ENCODE measurements at regions of chr3 and their contacts with region 1.

Region 1: GRCh38 chr3:24351779-24352469 is 142.7 kb downstream of the THRB start:
- DNase-seq: peak; percentile 49 to 95 (median 66)
- ATAC-seq: peak; percentile 86
- H3K4me3 ChIP-seq: no peak overlapping the region
- H3K27ac ChIP-seq: peak overlapping the region; percentile 89
- H3K4me1 ChIP-seq: peaks cover 3 to 56% of the 10 kb centered on the region in 2 experiments
- H3K27me3 ChIP-seq: no peaks in the 10 kb centered on the region
- CTCF ChIP-seq: no peak
- EP300 ChIP-seq: peak; percentile 93
- POLR2A ChIP-seq: no peak
- RAD21 ChIP-seq: peak in 1 of 2 experiments; percentile 48; a peak in 2 of 4 replicates

Region 2: GRCh38 chr3:23859016-23859743 is 492.7 kb before region 1 on chr3:
- CTCF ChIA-PET with region 1: no interaction called
- POLR2A ChIA-PET with region 1: no interaction called
- in situ Hi-C with region 1: no loop called
- intact Hi-C with region 1: no loop called
- DNase-seq: no peak
- ATAC-seq: no peak
- H3K4me3 ChIP-seq: no peak overlapping the region
- H3K27ac ChIP-seq: no peak overlapping the region
- H3K4me1 ChIP-seq: no peaks in the 10 kb centered on the region
- H3K27me3 ChIP-seq: no peaks in the 10 kb centered on the region
- CTCF ChIP-seq: no peak
- EP300 ChIP-seq: no peak
- POLR2A ChIP-seq: no peak
- RAD21 ChIP-seq: no peak

Region 3: DNA sequence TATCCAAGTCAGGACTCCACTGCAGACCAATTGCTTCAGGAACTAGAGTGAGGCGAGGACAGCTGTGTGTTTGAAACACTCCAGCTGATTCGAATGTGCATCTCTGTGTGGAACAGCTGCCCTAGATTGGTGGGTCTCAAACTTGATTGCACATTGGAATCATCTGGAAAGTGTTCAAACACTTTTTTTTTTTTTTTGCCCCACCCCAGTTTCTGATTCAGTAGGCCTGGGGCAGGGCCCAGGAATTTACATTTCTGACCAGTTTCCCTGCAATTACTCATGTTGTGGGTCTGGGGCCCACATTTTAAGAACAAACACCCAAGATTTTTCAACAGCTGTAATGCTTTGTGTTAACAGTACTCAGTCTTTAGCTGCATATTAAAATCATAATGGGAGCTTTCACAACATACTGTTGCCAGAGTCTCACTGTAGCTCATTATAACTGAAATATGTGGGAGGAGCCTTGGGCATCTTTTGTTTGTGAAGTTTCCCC is 250.2 kb before region 1 on chr3:
- CTCF ChIA-PET with region 1: no interaction called
- POLR2A ChIA-PET with region 1: no interaction called
- in situ Hi-C with region 1: no loop called
- intact Hi-C with region 1: no loop called
- DNase-seq: no peak
- ATAC-seq: no peak
- H3K4me3 ChIP-seq: no peak overlapping the region
- H3K27ac ChIP-seq: no peak overlapping the region
- H3K4me1 ChIP-seq: no peaks in the 10 kb centered on the region; a peak in 3 of 5 replicates
- H3K27me3 ChIP-seq: peaks cover 0 to 5% of the 10 kb centered on the region in 2 experiments; a peak in 1 of 5 replicates
- CTCF ChIP-seq: no peak
- EP300 ChIP-seq: no peak
- POLR2A ChIP-seq: no peak
- RAD21 ChIP-seq: no peak

Region 4: DNA sequence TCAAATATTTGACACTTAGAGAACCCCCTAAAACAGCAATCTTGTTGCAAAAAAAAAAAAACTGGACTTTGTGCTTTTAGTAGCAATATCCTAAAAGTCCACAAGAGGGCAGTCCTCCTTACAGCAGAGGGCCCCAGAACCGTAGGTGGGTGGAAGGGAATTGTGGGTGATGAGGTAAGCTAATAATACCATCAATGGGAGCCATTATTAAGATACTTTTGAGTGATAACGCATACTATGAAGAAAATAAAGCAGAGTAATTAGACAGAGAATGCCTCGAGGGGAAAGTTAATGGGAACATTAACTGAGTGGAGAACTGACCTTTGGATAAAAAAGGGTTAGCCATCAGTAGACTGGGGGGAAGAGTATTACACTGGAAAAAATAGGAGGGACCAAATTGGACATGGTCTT is 87.2 kb before region 1 on chr3:
- CTCF ChIA-PET with region 1: no interaction called
- POLR2A ChIA-PET with region 1: interaction called, 4 read pairs
- in situ Hi-C with region 1: no loop called
- intact Hi-C with region 1: loop called (anchors 1 kb)
- DNase-seq: peak; percentile 74 to 83 (median 78)
- ATAC-seq: peak; percentile 52
- H3K4me3 ChIP-seq: no peak overlapping the region
- H3K27ac ChIP-seq: no peak overlapping the region
- H3K4me1 ChIP-seq: peaks cover 9 to 24% of the 10 kb centered on the region in 2 experiments; a peak in 4 of 5 replicates
- H3K27me3 ChIP-seq: no peaks in the 10 kb centered on the region
- CTCF ChIP-seq: peak; percentile 71 to 87 (median 85)
- EP300 ChIP-seq: no peak
- POLR2A ChIP-seq: no peak
- RAD21 ChIP-seq: peak; percentile 73 to 82

Region 5: DNA sequence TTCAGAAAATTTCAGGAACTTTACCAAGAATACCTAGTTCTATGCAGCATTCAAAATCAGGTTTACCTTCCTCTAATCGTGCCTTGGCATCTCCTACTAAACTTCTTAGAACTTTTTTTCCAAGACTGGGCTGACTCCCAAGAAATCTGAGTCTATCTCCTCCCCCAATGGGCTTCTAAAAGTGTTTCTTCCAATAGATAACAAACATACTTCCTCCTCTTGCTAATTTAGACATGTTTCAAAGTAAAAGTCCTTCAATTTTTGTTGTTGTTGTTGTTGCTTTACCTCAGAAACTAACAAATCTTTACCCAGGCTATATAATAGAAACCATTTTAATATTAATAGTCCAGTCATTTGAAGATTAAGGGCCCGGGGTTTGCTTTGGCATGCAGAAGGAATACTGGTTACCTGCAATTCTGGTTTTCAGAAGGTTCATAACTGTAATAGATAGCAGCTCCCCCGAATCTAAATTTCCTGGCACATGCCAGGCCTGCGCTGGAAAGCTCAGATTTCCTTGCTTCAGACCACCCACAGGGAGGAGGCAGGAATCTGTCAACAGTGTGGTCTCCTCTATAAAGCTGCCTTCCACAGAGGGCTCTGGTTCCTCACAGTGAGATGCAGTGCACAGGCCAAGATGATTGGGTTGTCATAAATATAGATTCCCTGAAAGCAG is 46.0 kb before region 1 on chr3:
- CTCF ChIA-PET with region 1: no interaction called
- POLR2A ChIA-PET with region 1: no interaction called
- in situ Hi-C with region 1: no loop called
- intact Hi-C with region 1: loop called (anchors 2 kb)
- DNase-seq: peak; percentile 36 to 67 (median 50)
- ATAC-seq: peak; percentile 56
- H3K4me3 ChIP-seq: no peak overlapping the region
- H3K27ac ChIP-seq: no peak overlapping the region
- H3K4me1 ChIP-seq: peaks cover 7 to 8% of the 10 kb centered on the region in 2 experiments
- H3K27me3 ChIP-seq: no peaks in the 10 kb centered on the region
- CTCF ChIP-seq: no peak
- EP300 ChIP-seq: peak; percentile 68
- POLR2A ChIP-seq: no peak
- RAD21 ChIP-seq: no peak

Region 6: DNA sequence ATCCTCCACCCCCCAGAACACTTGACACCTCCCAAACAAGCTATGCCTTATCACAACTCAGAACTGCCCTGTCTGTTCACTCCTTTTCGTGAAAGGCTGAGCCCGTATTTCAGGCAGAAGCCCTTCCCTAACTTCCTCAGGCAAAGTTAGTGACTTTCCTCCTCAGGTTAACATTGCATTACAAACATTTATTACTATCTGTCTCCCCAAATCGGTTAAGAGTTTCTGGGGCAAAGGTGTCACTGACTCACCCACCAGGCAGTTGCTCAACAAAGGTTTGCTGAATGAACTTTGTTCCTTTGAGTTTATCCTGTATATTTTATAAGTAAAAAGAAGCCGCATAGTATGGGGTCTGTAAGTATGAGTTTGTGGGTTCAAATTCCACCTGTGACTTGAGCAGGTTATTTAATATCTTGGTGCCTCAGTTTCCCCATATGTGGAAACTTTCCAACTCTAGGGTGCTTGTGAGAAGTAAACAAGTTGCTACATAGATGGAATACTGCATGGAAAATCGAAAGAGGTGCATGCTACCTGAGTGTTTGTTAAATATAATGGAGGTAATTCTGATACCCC is 35.0 kb before region 1 on chr3:
- CTCF ChIA-PET with region 1: no interaction called
- POLR2A ChIA-PET with region 1: no interaction called
- in situ Hi-C with region 1: no loop called
- intact Hi-C with region 1: no loop called
- DNase-seq: peak in 1 of 4 experiments; percentile 23
- ATAC-seq: peak; percentile 62
- H3K4me3 ChIP-seq: no peak overlapping the region
- H3K27ac ChIP-seq: no peak overlapping the region
- H3K4me1 ChIP-seq: peaks cover 3% of the 10 kb centered on the region in 2 experiments; a peak in 2 of 5 replicates
- H3K27me3 ChIP-seq: no peaks in the 10 kb centered on the region
- CTCF ChIP-seq: no peak
- EP300 ChIP-seq: no peak
- POLR2A ChIP-seq: no peak
- RAD21 ChIP-seq: no peak

Region 7: GRCh38 chr3:24341668-24342067 is 10.3 kb before region 1 on chr3:
- CTCF ChIA-PET with region 1: no interaction called
- POLR2A ChIA-PET with region 1: interaction called, 10 read pairs
- in situ Hi-C with region 1: no loop called
- intact Hi-C with region 1: no loop called
- DNase-seq: peak in 1 of 4 experiments; percentile 40
- ATAC-seq: peak; percentile 66
- H3K4me3 ChIP-seq: no peak overlapping the region
- H3K27ac ChIP-seq: 0 out of 3 replicates have a peak overlapping the region, but pooled peaks have one; percentile 15
- H3K4me1 ChIP-seq: peaks cover 6 to 28% of the 10 kb centered on the region in 2 experiments; a peak in 3 of 5 replicates
- H3K27me3 ChIP-seq: no peaks in the 10 kb centered on the region
- CTCF ChIP-seq: no peak
- EP300 ChIP-seq: no peak
- POLR2A ChIP-seq: no peak
- RAD21 ChIP-seq: no peak

Region 8: DNA sequence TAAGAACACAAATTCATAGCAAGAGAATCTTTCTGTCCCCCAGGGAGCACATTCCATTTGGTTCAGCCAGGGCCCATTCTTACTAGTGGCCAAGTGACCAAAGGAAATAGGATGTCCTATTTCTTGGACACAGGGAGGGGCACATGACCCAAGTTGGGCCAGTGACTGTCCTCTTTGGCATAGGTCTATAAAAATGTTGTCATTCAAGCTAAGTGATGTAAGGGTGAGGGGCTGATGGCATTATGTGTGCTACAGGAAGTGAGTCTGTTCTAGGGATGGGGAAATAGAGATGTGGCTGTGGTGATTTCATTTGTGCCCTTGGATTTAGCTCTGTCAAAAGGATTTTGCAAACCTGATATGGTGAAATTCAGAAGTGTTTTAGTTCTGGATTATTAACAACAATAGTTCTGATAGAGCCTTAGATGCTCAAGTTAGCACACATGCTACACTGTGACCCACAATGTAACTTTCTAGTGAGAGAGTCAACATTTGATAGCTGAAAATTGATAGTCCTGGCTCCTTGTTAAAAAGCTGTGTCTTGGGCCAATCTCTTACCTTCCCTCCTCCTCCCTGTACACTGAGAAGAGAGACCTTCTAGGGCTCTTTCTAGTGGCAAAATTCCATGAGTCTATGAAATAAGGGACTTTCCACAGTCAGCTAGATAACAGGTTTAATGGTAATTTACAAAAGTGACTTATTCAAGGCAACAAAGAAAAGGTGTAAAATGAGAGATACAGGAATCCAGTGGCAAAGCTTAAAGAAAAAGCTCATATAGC is 25.5 kb after region 1 on chr3:
- CTCF ChIA-PET with region 1: no interaction called
- POLR2A ChIA-PET with region 1: interaction called, 11 read pairs
- in situ Hi-C with region 1: no loop called
- intact Hi-C with region 1: loop called (anchors 2 kb)
- DNase-seq: no peak
- ATAC-seq: peak; percentile 27
- H3K4me3 ChIP-seq: no peak overlapping the region
- H3K27ac ChIP-seq: peak overlapping the region; percentile 67; the same call in 2 of the 3 replicates
- H3K4me1 ChIP-seq: peaks cover 3 to 49% of the 10 kb centered on the region in 2 experiments; a peak in 3 of 5 replicates
- H3K27me3 ChIP-seq: no peaks in the 10 kb centered on the region
- CTCF ChIP-seq: no peak
- EP300 ChIP-seq: no peak
- POLR2A ChIP-seq: no peak
- RAD21 ChIP-seq: no peak

Region 9: DNA sequence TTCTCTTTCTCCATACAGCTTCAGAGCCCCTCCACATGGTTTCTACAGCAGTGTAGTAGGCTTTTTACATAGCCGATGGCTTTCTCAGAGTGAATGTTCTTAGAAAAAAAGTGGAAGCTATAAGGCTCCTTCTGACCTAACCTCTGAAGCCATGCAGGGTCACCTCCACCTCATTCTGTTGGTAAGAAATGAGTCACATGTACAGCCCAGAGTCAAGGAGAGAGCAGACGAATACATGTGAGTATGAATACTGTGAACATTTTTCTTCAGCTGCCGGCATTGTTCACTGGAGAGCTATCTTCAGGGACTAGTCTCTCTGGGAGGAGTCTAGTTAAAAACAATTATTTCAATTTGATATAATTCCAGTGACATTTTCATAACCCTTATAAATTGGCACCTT is 211.0 kb after region 1 on chr3:
- CTCF ChIA-PET with region 1: no interaction called
- POLR2A ChIA-PET with region 1: no interaction called
- in situ Hi-C with region 1: no loop called
- intact Hi-C with region 1: no loop called
- DNase-seq: peak in 1 of 4 experiments; percentile 28
- ATAC-seq: peak; percentile 78
- H3K4me3 ChIP-seq: no peak overlapping the region
- H3K27ac ChIP-seq: no peak overlapping the region
- H3K4me1 ChIP-seq: no peaks in the 10 kb centered on the region
- H3K27me3 ChIP-seq: no peaks in the 10 kb centered on the region
- CTCF ChIP-seq: no peak
- EP300 ChIP-seq: no peak
- POLR2A ChIP-seq: no peak
- RAD21 ChIP-seq: no peak

Region 10: GRCh38 chr3:24582431-24583403 is 230.8 kb after region 1 on chr3:
- CTCF ChIA-PET with region 1: no interaction called
- POLR2A ChIA-PET with region 1: interaction called, 4 read pairs
- in situ Hi-C with region 1: no loop called
- intact Hi-C with region 1: loop called (anchors 5 kb)
- DNase-seq: peak in 2 of 4 experiments; percentile 33 to 41
- ATAC-seq: peak; percentile 68
- H3K4me3 ChIP-seq: no peak overlapping the region
- H3K27ac ChIP-seq: no peak overlapping the region
- H3K4me1 ChIP-seq: peaks cover 6 to 7% of the 10 kb centered on the region in 2 experiments; a peak in 4 of 5 replicates
- H3K27me3 ChIP-seq: no peaks in the 10 kb centered on the region
- CTCF ChIP-seq: peak; percentile 40 to 59 (median 51); a peak in 5 of 6 replicates
- EP300 ChIP-seq: no peak
- POLR2A ChIP-seq: no peak
- RAD21 ChIP-seq: peak; percentile 49 to 71